WTC11 (cell line): ENCODE measurements at regions of chr20 and their contacts with region 1.

Region 1: GRCh38 chr20:18380908-18381529 is 85.8 kb downstream of the DZANK1 start:
- DNase-seq: peak; percentile 50
- ATAC-seq: peak; percentile 89
- H3K4me3 Mint-ChIP-seq: no peak overlapping the region
- H3K27ac Mint-ChIP-seq: no peak overlapping the region
- H3K4me1 Mint-ChIP-seq: no peaks in the 10 kb centered on the region
- H3K27me3 Mint-ChIP-seq: no peaks in the 10 kb centered on the region
- CTCF ChIP-seq: no peak

Region 2: DNA sequence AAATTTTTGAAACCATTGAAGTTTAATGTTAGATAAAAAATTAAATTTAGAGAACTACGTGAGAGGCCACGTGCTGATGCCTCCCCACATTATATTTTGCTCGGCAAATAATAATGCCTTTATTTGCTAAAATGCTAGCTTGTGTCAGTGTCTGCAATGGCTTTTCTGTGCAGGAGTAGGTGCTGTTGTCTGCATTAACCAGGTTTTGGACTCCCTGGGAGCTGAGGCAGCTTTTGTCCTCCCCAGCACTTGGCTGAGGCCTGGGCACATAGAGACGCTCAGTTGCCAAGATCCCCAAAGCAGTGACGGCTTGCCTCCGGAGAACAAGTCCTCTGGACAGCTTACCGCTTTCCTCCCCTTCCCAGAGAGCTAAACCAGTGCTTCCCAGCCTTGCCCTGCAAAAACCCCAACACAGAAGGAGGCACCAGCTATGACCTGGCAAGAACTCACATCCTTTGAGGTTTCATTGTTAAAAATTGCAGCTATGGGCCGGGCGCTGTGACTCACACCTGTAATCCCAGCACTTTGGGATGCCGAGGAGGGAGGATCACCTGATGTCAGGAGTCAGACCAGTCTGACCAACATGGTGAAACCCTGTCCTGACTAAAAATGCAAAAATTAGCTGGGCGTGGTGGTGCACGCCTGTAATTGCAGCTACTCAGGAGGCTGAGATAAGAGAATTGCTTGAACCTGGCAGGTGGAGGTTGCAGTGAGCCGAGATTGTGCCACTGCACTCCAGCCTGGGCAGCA is 183.5 kb before region 1 on chr20:
- CTCF ChIA-PET with region 1: no interaction called
- POLR2A ChIA-PET with region 1: no interaction called
- DNase-seq: no peak
- ATAC-seq: no peak
- H3K4me3 Mint-ChIP-seq: no peak overlapping the region
- H3K27ac Mint-ChIP-seq: no peak overlapping the region
- H3K4me1 Mint-ChIP-seq: no peaks in the 10 kb centered on the region
- H3K27me3 Mint-ChIP-seq: no peaks in the 10 kb centered on the region
- CTCF ChIP-seq: no peak

Region 3: DNA sequence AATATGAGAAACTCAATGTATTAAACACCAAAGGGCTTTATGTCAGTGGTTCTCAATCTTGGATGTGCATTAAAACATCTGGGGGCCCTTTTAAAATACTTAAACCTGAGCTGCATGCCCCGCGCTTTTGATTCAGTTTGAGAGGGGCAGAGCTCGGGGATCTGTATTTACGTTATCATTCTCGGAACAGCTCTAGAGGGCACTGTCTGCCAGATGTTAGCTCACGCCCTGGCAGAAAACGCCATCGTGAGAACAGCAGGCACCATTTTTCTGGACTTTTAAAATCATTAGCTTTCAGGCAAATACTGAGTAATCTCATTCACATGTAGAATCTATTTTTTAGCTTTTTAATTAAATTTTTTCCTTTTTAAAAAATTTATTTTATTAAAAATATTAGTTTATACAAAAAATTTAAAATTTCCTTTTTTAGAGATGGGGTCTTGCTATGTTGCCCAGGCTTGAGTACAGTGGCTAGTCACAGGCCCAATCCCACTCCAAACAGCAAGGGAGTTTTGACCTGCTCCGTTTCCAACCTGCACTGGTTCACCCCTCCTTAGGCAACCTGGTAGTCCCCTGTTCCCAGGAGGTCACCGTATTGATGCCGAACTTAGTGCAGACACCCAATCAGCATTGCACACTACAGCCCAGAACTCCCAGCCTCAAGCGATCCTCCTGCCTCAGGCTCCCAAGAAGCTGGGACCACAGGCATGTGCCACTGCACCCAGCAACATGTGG is 122.7 kb before region 1 on chr20:
- CTCF ChIA-PET with region 1: interaction called, 18 read pairs
- POLR2A ChIA-PET with region 1: no interaction called
- DNase-seq: no peak
- ATAC-seq: no peak; the same call in 1 of the 2 replicates
- H3K4me3 Mint-ChIP-seq: no peak overlapping the region
- H3K27ac Mint-ChIP-seq: no peak overlapping the region
- H3K4me1 Mint-ChIP-seq: no peaks in the 10 kb centered on the region
- H3K27me3 Mint-ChIP-seq: no peaks in the 10 kb centered on the region
- CTCF ChIP-seq: no peak